OCI-LY7 (cell line): ENCODE measurements at regions of chr16 and their contacts with region 1.

Region 1: DNA sequence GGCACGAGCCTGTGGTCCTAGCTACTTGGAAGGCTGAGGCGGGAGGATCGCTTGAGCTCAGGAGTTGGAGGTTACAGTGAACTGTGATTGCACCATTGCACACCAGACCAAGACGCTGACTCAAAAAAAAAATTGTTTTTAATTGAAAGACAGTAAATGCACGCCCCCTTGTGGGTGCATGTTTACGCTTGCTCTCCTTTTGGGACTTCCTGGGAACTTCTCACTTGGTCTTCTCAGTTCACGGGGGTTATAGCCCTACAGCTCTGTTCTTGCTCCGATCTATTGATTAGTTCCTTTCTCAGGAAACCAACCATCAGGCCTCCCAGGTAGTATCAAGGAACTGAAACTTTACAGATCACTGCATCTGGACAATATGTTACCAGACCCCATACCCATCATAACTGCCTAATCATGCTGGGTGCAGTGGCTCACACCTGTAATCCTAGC is 14.2 kb upstream of the RIPOR1 start:
- DNase-seq: peak; percentile 95
- H3K4me3 ChIP-seq: peak overlapping the region; percentile 12
- H3K27ac ChIP-seq: peak overlapping the region; percentile 91
- H3K4me1 ChIP-seq: peaks cover 63% of the 10 kb centered on the region
- CTCF ChIP-seq: peak; percentile 82

Region 2: GRCh38 chr16:67480833-67481560 is 33.4 kb before region 1 on chr16 and contains the start of gene ATP6V0D1:
- CTCF ChIA-PET with region 1: interaction called, 8 read pairs
- POLR2A ChIA-PET with region 1: interaction called, 23 read pairs
- intact Hi-C with region 1: loop called (anchors 1 kb)
- DNase-seq: peak; percentile 99
- H3K4me3 ChIP-seq: peak within 1 kb of the TSS; percentile 88
- H3K27ac ChIP-seq: peak within 1 kb of the TSS; percentile 72
- H3K4me1 ChIP-seq: peaks cover 39% of the 10 kb centered on the region
- CTCF ChIP-seq: peak; percentile 88
- total RNA-seq, gene ATP6V0D1: 13.5 and 24.4 TPM in 2 replicates

Region 3: DNA sequence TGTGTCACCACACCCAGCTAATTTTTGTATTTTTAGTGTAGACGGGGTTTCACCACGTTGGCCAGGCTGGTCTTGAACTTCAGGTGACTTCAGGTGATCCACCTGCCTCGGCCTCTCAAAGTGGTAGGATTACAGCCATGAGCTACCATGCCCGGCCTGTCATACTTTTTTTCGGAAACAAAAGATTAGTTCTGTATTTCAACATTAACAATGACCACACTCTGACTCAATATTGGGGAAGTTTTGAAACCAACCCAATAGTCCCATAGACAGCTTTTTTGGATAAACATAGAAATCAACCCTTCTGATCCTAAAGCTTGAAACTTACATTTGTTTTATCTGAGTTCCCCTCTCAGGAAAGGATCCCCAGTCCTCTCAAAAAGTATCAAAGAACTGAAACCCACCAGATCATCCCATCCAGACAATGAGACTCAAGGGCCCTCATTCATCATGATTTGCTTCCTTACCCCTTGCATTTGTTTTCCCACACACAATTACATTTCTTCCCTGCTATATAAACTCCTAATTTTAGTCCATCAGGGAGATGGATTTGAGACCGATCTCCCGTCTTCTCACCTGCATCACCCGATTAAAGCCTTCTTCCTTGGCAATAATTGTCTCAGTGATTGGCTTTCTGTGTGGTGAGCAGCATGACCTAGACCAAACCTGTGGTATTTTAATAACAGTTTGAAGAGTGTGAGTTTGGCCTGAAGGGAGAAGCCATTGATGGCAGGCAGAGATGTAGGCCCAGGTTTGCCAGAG is 23.9 kb before region 1 on chr16:
- CTCF ChIA-PET with region 1: interaction called, 9 read pairs
- POLR2A ChIA-PET with region 1: interaction called, 23 read pairs
- intact Hi-C with region 1: loop called (anchors 1 kb)
- DNase-seq: no peak
- H3K4me3 ChIP-seq: no peak overlapping the region
- H3K27ac ChIP-seq: no peak overlapping the region
- H3K4me1 ChIP-seq: peaks cover 68% of the 10 kb centered on the region
- CTCF ChIP-seq: no peak

Region 4: GRCh38 chr16:67499106-67499505 is 15.3 kb before region 1 on chr16:
- CTCF ChIA-PET with region 1: interaction called, 5 read pairs
- POLR2A ChIA-PET with region 1: interaction called, 6 read pairs
- intact Hi-C with region 1: loop called (anchors 1 kb)
- DNase-seq: no peak
- H3K4me3 ChIP-seq: no peak overlapping the region
- H3K27ac ChIP-seq: no peak overlapping the region
- H3K4me1 ChIP-seq: peaks cover 15% of the 10 kb centered on the region
- CTCF ChIP-seq: no peak